HepG2 (cell line): ENCODE measurements at regions of chr11 and their contacts with region 1.

Region 1: GRCh38 chr11:69122642-69123431 is 32.9 kb upstream of the SMIM38 start:
- DNase-seq: peak; percentile 91
- ATAC-seq: peak; percentile 97
- H3K4me3 ChIP-seq: peak overlapping the region in 2 of 3 experiments; percentile 1 to 51; a peak in 1 of 6 replicates
- H3K27ac ChIP-seq: no peak overlapping the region
- H3K4me1 ChIP-seq: peaks cover 24% of the 10 kb centered on the region
- H3K27me3 ChIP-seq: peaks cover 3% of the 10 kb centered on the region in 2 experiments; a peak in 1 of 5 replicates
- CTCF ChIP-seq: peak; percentile 16; the same call in 1 of the 2 replicates
- EP300 ChIP-seq: peak; percentile 62 to 71
- POLR2A ChIP-seq: no peak
- RAD21 ChIP-seq: no peak

Region 2: GRCh38 chr11:69166218-69167115 is 43.6 kb after region 1 on chr11:
- CTCF ChIA-PET with region 1: no interaction called
- POLR2A ChIA-PET with region 1: no interaction called
- in situ Hi-C with region 1: no loop called
- intact Hi-C with region 1: no loop called
- DNase-seq: peak; percentile 50
- ATAC-seq: peak; percentile 65
- H3K4me3 ChIP-seq: no peak overlapping the region
- H3K27ac ChIP-seq: no peak overlapping the region
- H3K4me1 ChIP-seq: peaks cover 10% of the 10 kb centered on the region
- H3K27me3 ChIP-seq: peaks cover 0 to 13% of the 10 kb centered on the region in 2 experiments; a peak in 1 of 5 replicates
- CTCF ChIP-seq: no peak
- EP300 ChIP-seq: no peak
- POLR2A ChIP-seq: no peak
- RAD21 ChIP-seq: no peak

Region 3: GRCh38 chr11:69296890-69297786 is 174.3 kb after region 1 on chr11:
- CTCF ChIA-PET with region 1: no interaction called
- POLR2A ChIA-PET with region 1: no interaction called
- in situ Hi-C with region 1: loop called (anchors 10 kb)
- intact Hi-C with region 1: no loop called
- DNase-seq: peak; percentile 89
- ATAC-seq: peak; percentile 63
- H3K4me3 ChIP-seq: peak overlapping the region in 2 of 3 experiments; percentile 18 to 60; a peak in 3 of 6 replicates
- H3K27ac ChIP-seq: peak overlapping the region; percentile 25
- H3K4me1 ChIP-seq: peaks cover 51% of the 10 kb centered on the region
- H3K27me3 ChIP-seq: no peaks in the 10 kb centered on the region
- CTCF ChIP-seq: no peak
- EP300 ChIP-seq: peak in 1 of 2 experiments; percentile 64; a peak in 1 of 4 replicates
- POLR2A ChIP-seq: no peak
- RAD21 ChIP-seq: no peak

Region 4: GRCh38 chr11:69654569-69655327 is 531.9 kb after region 1 on chr11:
- CTCF ChIA-PET with region 1: no interaction called
- POLR2A ChIA-PET with region 1: no interaction called
- in situ Hi-C with region 1: loop called (anchors 5 kb)
- intact Hi-C with region 1: no loop called
- DNase-seq: peak; percentile 94
- ATAC-seq: peak; percentile 58
- H3K4me3 ChIP-seq: peak overlapping the region in 1 of 3 experiments; percentile 48; a peak in 2 of 6 replicates
- H3K27ac ChIP-seq: peak overlapping the region; percentile 88
- H3K4me1 ChIP-seq: peaks cover 69% of the 10 kb centered on the region
- H3K27me3 ChIP-seq: no peaks in the 10 kb centered on the region
- CTCF ChIP-seq: peak; percentile 57
- EP300 ChIP-seq: peak; percentile 71 to 88; a peak in 3 of 4 replicates
- POLR2A ChIP-seq: peak; percentile 57 to 62
- RAD21 ChIP-seq: 0 out of 2 replicates have a peak, but pooled peaks have one; percentile 7